ENCODE measurements at regions of chr7 and their contacts with region 1.

Region 1: DNA sequence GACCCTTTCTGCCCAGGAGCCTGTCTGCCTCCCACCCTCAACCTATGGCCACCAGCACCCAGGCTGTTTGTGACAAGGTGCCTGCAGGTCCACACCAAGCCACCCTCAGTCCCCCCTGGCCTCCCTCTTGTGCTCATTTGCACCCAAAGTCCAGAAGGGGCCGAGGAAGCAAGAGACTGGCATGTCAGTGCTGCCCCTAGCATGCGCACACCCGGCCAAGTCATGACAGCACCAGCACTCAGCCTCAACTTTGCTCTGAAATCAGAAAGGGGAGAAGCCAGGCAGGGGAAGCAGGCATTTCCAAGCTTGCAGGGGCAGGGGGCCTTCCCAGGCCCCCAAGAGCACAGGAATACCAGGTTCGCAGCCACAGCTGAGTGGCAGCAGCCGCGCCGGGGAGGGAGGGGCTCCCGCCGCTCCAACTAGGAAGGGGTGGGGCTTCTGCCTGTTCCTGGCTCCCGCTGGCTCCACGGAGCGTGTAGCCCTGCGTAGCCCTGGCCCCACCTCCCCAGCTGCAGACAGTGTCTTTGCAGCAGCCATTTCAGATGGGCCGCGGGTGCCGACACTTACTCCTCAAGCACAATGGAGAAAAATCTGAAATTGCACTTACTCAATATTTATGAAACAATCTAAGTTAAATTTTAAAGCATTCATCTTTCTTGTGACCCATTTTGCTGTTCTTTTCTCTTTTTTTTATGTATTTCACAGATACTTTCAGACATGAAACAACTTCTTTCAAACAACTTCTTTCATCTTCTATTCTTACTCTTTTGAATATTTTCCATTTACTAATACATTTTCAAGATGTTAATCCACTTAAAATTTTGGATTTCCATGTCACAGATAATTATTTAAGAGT is 54.9 kb upstream of the ABCB5 start:
- DNase-seq: no peak
- H3K4me3 ChIP-seq: no peak overlapping the region
- H3K27ac ChIP-seq: no peak overlapping the region
- H3K4me1 ChIP-seq: peaks cover 11% of the 10 kb centered on the region
- H3K27me3 ChIP-seq: no peaks in the 10 kb centered on the region
- CTCF ChIP-seq: no peak

Region 2: GRCh38 chr7:20440472-20441105 is 120.0 kb before region 1 on chr7:
- CTCF ChIA-PET with region 1: no interaction called
- POLR2A ChIA-PET with region 1: no interaction called
- intact Hi-C with region 1: no loop called
- DNase-seq: no peak
- H3K4me3 ChIP-seq: no peak overlapping the region
- H3K27ac ChIP-seq: no peak overlapping the region
- H3K4me1 ChIP-seq: 0 out of 2 replicates have a peak, but pooled peaks cover 5% of the 10 kb centered on the region
- H3K27me3 ChIP-seq: no peaks in the 10 kb centered on the region
- CTCF ChIP-seq: peak; percentile 68

Region 3: DNA sequence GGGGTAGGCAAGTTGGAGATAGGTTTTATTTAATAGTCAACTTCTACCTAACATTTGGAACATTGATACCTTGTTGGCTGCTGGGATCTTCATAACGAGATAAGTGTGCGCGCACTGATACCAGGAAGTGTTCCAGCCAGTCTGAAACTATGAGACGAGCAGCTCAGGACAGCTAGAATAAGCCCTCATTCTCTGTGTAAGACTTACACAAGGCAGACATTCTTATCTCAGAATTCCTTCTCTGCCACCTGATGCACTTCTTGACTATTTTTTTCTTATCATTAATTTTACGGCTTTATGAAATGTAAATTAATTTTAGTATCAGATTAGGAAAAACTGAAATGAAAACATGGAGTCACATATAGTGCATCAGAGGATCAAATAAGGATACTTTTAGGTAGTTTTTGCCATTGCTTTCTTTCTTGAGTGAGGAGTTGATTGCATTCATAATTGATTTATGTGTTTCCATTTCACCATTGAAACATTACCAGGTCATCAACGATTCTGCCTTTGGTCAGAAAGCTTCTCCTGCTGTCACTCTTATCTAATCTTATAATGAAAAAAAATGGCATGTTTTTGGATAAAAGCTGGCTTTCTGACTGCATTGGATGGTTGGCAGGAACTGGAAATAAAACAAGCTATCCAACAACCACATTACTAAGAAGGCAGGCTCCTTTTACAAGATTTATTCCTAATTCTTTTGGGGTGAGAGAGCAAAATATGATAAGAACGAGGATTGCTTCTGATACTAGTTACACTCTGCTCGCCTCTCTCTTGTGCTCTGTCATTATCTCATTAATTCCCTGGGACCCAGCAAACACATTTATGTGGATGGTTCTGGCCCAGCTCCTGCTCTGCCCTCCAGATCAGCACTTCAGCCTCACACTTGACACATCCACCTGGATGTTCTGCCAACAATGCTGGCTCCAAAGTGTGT is 14.5 kb after region 1 on chr7:
- CTCF ChIA-PET with region 1: no interaction called
- POLR2A ChIA-PET with region 1: no interaction called
- intact Hi-C with region 1: loop called (anchors 2 kb)
- DNase-seq: no peak
- H3K4me3 ChIP-seq: no peak overlapping the region
- H3K27ac ChIP-seq: no peak overlapping the region
- H3K4me1 ChIP-seq: no peaks in the 10 kb centered on the region
- H3K27me3 ChIP-seq: no peaks in the 10 kb centered on the region
- CTCF ChIP-seq: no peak